IMR-90 (cell line): ENCODE measurements at regions of chr3 and their contacts with region 1.

Region 1: GRCh38 chr3:58754074-58754473 is 87.5 kb upstream of the FAM3D start:
- DNase-seq: no peak
- ATAC-seq: no peak
- H3K4me3 ChIP-seq: no peak overlapping the region
- H3K27ac ChIP-seq: no peak overlapping the region
- H3K4me1 ChIP-seq: no peaks in the 10 kb centered on the region
- H3K27me3 ChIP-seq: no peaks in the 10 kb centered on the region
- CTCF ChIP-seq: no peak
- POLR2A ChIP-seq: no peak
- RAD21 ChIP-seq: no peak

Region 2: GRCh38 chr3:59163953-59164352 is 409.9 kb after region 1 on chr3:
- CTCF ChIA-PET with region 1: no interaction called
- POLR2A ChIA-PET with region 1: no interaction called
- dilution Hi-C with region 1: no loop called
- in situ Hi-C with region 1: no loop called
- intact Hi-C with region 1: loop called (anchors 10 kb)
- DNase-seq: no peak
- ATAC-seq: no peak
- H3K4me3 ChIP-seq: no peak overlapping the region
- H3K27ac ChIP-seq: no peak overlapping the region
- H3K4me1 ChIP-seq: no peaks in the 10 kb centered on the region
- H3K27me3 ChIP-seq: no peaks in the 10 kb centered on the region; the same call in 1 of the 2 replicates
- CTCF ChIP-seq: no peak
- POLR2A ChIP-seq: no peak
- RAD21 ChIP-seq: no peak